Activated T-helper 1 cell treated with anti-CD3 and anti-CD28 coated beads, Interleukin-12 subunit alpha, Interleukin-12 subunit beta, Interleukin-2, Interleukin-4 antibody, amounts not matched to agents 30 ng/mL and 10 ng/mL and 1 ng/mL, durations not matched to agents 14 hours and 24 hours and 36 hours (primary cell): ENCODE measurements at regions of chr9 and their contacts with region 1.

Region 1: GRCh38 chr9:84296146-84296843 is 44.3 kb downstream of the SLC28A3 start:
- DNase-seq: peak; percentile 61
- H3K4me3 Mint-ChIP-seq: peak overlapping the region; percentile 66
- H3K27ac Mint-ChIP-seq: peak overlapping the region; percentile 100
- H3K4me1 Mint-ChIP-seq: peaks cover 83% of the 10 kb centered on the region
- H3K27me3 Mint-ChIP-seq: no peaks in the 10 kb centered on the region

Region 2: DNA sequence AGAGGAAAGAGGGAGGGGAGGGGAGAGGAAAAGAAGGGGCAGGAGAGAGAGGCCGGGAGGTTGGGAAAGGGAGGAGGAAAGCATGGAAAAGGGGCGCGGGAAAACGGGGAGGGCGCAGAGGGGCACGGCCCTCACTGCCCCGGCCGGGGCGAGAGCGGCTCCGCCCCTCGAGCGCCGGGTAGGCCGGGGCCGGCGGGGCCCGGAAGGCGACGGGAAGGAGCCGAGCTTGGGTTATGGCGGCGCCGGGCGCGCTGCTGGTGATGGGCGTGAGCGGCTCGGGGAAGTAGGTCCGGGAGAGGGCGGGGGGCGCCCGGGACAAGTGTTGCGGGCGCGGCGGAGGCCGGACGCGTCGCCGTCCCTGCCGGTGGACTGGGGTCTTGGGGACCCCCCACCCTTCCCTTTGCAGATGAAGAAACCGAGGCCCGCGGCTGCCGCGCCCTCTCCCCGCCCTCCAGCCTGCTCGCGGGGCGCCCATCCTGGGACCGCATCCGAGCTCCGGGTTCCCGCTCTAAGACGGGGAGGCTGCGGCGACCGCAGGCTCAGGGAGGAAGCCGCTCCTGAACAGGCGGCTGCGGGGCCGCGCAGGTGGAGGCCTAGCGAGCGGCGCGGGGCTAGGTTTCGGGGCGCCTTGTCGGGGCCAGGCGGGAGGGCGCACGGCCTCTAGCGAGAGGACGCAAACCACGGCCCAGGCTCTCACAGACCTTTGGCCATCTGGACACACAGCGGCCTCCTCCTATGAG is 673.2 kb before region 1 on chr9 and contains the start of gene IDNK:
- intact Hi-C with region 1: loop called (anchors 5 kb)
- DNase-seq: peak; percentile 60
- H3K4me3 Mint-ChIP-seq: peak within 1 kb of the TSS; percentile 91
- H3K27ac Mint-ChIP-seq: peak within 1 kb of the TSS; percentile 97
- H3K4me1 Mint-ChIP-seq: peaks cover 44% of the 10 kb centered on the region
- H3K27me3 Mint-ChIP-seq: peaks cover 10% of the 10 kb centered on the region
- total RNA-seq, gene IDNK: 4.5 and 6.3 TPM in 2 replicates

Region 3: GRCh38 chr9:83920927-83921707 is 375.2 kb before region 1 on chr9 and contains the start of gene KIF27:
- intact Hi-C with region 1: loop called (anchors 5 kb)
- DNase-seq: peak; percentile 98
- H3K4me3 Mint-ChIP-seq: peak within 1 kb of the TSS; percentile 85
- H3K27ac Mint-ChIP-seq: peak within 1 kb of the TSS; percentile 91
- H3K4me1 Mint-ChIP-seq: peaks cover 17% of the 10 kb centered on the region
- H3K27me3 Mint-ChIP-seq: no peaks in the 10 kb centered on the region
- total RNA-seq, gene KIF27: 2.9 TPM in 2 replicates

Region 4: GRCh38 chr9:84177407-84177806 is 118.9 kb before region 1 on chr9:
- intact Hi-C with region 1: no loop called
- DNase-seq: no peak
- H3K4me3 Mint-ChIP-seq: no peak overlapping the region
- H3K27ac Mint-ChIP-seq: no peak overlapping the region
- H3K4me1 Mint-ChIP-seq: no peaks in the 10 kb centered on the region
- H3K27me3 Mint-ChIP-seq: no peaks in the 10 kb centered on the region

Region 5: GRCh38 chr9:84230355-84231145 is 65.7 kb before region 1 on chr9:
- intact Hi-C with region 1: no loop called
- DNase-seq: no peak
- H3K4me3 Mint-ChIP-seq: no peak overlapping the region
- H3K27ac Mint-ChIP-seq: no peak overlapping the region
- H3K4me1 Mint-ChIP-seq: no peaks in the 10 kb centered on the region
- H3K27me3 Mint-ChIP-seq: peaks cover 2% of the 10 kb centered on the region

Region 6: GRCh38 chr9:84251921-84252320 is 44.4 kb before region 1 on chr9:
- intact Hi-C with region 1: no loop called
- DNase-seq: no peak
- H3K4me3 Mint-ChIP-seq: no peak overlapping the region
- H3K27ac Mint-ChIP-seq: no peak overlapping the region
- H3K4me1 Mint-ChIP-seq: no peaks in the 10 kb centered on the region
- H3K27me3 Mint-ChIP-seq: peaks cover 15% of the 10 kb centered on the region

Region 7: GRCh38 chr9:84271531-84271900 is 24.8 kb before region 1 on chr9:
- intact Hi-C with region 1: loop called (anchors 1 kb)
- DNase-seq: peak; percentile 65
- H3K4me3 Mint-ChIP-seq: peak overlapping the region; percentile 78
- H3K27ac Mint-ChIP-seq: peak overlapping the region; percentile 70
- H3K4me1 Mint-ChIP-seq: peaks cover 42% of the 10 kb centered on the region
- H3K27me3 Mint-ChIP-seq: peaks cover 5% of the 10 kb centered on the region

Region 8: GRCh38 chr9:84343111-84343521 is 46.8 kb after region 1 on chr9:
- intact Hi-C with region 1: no loop called
- DNase-seq: no peak
- H3K4me3 Mint-ChIP-seq: no peak overlapping the region
- H3K27ac Mint-ChIP-seq: no peak overlapping the region
- H3K4me1 Mint-ChIP-seq: no peaks in the 10 kb centered on the region
- H3K27me3 Mint-ChIP-seq: peaks cover 12% of the 10 kb centered on the region

Region 9: GRCh38 chr9:84759300-84759750 is 463.0 kb after region 1 on chr9:
- intact Hi-C with region 1: loop called (anchors 2 kb)
- DNase-seq: peak; percentile 49
- H3K4me3 Mint-ChIP-seq: peak overlapping the region; percentile 59
- H3K27ac Mint-ChIP-seq: peak overlapping the region; percentile 83
- H3K4me1 Mint-ChIP-seq: peaks cover 55% of the 10 kb centered on the region
- H3K27me3 Mint-ChIP-seq: no peaks in the 10 kb centered on the region